CD4-positive, alpha-beta memory T cell (primary cell): ENCODE measurements at regions of chr2 and their contacts with region 1.

Region 1: GRCh38 chr2:168246483-168247340 is 683 bp downstream of the STK39 start:
- DNase-seq: peak; percentile 86 to 95 (median 88)
- H3K4me3 ChIP-seq: peak overlapping the region; percentile 58 to 66
- H3K4me3 Mint-ChIP-seq: peak overlapping the region; percentile 91 to 94 (median 93)
- H3K27ac ChIP-seq: peak overlapping the region; percentile 66
- H3K27ac Mint-ChIP-seq: peak overlapping the region; percentile 89 to 96 (median 96)
- H3K4me1 ChIP-seq: peaks cover 49% of the 10 kb centered on the region
- H3K4me1 Mint-ChIP-seq: peaks cover 26 to 53% (median 32%) of the 10 kb centered on the region in 4 donors
- H3K27me3 ChIP-seq: no peaks in the 10 kb centered on the region
- H3K27me3 Mint-ChIP-seq: no peaks in the 10 kb centered on the region

Region 2: DNA sequence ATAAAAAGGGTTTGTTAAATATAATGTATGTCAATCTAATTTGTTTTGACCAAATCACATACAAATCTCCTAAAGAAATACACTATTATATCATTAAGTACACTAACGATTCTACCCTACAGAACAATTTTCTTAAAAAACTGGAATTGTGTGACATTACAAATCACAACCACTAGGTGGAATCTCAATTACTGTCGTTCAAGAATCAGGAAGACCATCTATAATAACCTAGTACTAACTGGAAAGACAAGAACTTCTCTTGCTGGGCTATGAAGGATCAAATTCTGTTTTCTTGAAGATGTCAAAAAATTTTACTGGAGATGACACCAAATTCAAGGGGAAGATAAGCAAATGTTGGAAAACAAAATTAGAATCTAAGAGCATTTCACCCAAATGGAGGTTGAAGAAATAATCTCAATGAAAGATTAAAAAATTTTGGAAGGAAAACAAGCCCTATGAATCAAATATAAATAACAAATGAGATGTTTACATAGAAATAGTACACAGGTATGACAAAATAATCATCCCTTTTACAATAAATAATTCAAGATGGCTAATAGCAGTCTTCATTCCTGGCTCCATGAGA is 110.2 kb before region 1 on chr2:
- CTCF ChIA-PET with region 1: interaction called, 3 read pairs
- POLR2A ChIA-PET with region 1: no interaction called
- intact Hi-C with region 1: loop called (anchors 2 kb)
- DNase-seq: peak in 4 of 5 donors; percentile 19 to 41 (median 30)
- H3K4me3 ChIP-seq: no peak overlapping the region
- H3K4me3 Mint-ChIP-seq: no peak overlapping the region
- H3K27ac ChIP-seq: no peak overlapping the region
- H3K27ac Mint-ChIP-seq: peak overlapping the region in 1 of 7 donors; percentile 73
- H3K4me1 ChIP-seq: no peaks in the 10 kb centered on the region
- H3K4me1 Mint-ChIP-seq: peaks cover 8 to 25% (median 21%) of the 10 kb centered on the region in 4 donors
- H3K27me3 ChIP-seq: no peaks in the 10 kb centered on the region
- H3K27me3 Mint-ChIP-seq: no peaks in the 10 kb centered on the region

Region 3: DNA sequence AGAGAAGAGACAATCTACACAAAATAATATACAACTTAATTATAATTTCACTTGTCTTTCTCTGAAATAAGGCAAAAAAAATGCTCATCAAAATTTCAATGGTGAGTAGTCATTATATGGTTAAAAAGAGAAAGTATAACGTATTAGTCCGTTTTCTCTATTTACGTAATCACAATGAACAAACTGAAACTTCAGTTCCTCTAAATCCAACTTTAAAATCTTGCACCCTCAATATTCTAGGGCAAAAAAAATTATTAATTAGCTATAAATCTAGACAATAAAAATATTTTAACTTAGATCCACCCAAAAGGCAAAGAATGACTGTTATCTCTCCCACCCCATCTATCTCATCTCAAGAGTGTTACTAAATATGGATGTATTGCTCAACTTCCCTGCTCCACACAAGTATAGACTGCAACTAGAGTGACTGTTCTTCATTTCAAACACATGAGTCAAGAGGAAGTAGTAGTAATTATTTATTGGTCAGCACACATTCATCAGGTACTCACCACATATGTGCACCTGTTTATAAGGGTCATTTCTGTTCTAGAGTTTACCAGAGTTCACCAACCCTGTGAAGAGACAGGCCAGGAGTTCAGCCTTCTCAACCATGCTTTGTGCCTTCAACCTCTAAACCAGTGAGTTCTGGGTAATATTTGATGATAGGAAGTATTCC is 35.7 kb before region 1 on chr2:
- CTCF ChIA-PET with region 1: no interaction called
- POLR2A ChIA-PET with region 1: interaction called, 6 read pairs
- intact Hi-C with region 1: loop called (anchors 2 kb)
- DNase-seq: no peak
- H3K4me3 ChIP-seq: no peak overlapping the region
- H3K4me3 Mint-ChIP-seq: peak overlapping the region; percentile 18 to 89 (median 70)
- H3K27ac ChIP-seq: no peak overlapping the region
- H3K27ac Mint-ChIP-seq: peak overlapping the region in 6 of 7 donors; percentile 0 to 59 (median 12)
- H3K4me1 ChIP-seq: peaks cover 34% of the 10 kb centered on the region
- H3K4me1 Mint-ChIP-seq: peaks cover 46 to 63% (median 57%) of the 10 kb centered on the region in 4 donors
- H3K27me3 ChIP-seq: no peaks in the 10 kb centered on the region
- H3K27me3 Mint-ChIP-seq: no peaks in the 10 kb centered on the region

Region 4: DNA sequence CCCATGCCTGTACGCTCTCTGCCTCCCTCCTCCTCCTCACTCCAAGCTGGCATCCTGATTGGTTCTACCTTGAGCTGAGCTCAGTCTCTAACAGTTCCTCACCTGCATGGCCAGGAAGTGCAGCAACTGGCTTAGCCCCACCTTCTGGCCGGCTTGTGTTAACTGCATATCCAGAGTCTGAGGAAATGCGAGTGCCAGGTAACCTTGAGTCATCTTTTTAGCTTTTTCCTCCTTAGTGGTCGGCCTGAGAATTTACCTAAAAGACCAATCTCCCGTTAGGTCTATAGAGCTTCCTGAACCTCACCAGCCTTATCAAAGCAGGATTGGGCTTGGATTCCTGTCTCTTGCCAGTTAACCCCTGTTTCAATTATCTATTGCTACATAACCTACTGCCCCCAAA is 90.2 kb after region 1 on chr2:
- CTCF ChIA-PET with region 1: interaction called, 8 read pairs
- POLR2A ChIA-PET with region 1: no interaction called
- intact Hi-C with region 1: loop called (anchors 2 kb)
- DNase-seq: peak; percentile 46 to 66 (median 58)
- H3K4me3 ChIP-seq: no peak overlapping the region
- H3K4me3 Mint-ChIP-seq: no peak overlapping the region
- H3K27ac ChIP-seq: no peak overlapping the region
- H3K27ac Mint-ChIP-seq: peak overlapping the region in 1 of 7 donors; percentile 38
- H3K4me1 ChIP-seq: peaks cover 4% of the 10 kb centered on the region
- H3K4me1 Mint-ChIP-seq: peaks cover 2 to 8% (median 4%) of the 10 kb centered on the region in 4 donors
- H3K27me3 ChIP-seq: no peaks in the 10 kb centered on the region
- H3K27me3 Mint-ChIP-seq: peaks cover 2 to 4% of the 10 kb centered on the region in 2 donors

Region 5: DNA sequence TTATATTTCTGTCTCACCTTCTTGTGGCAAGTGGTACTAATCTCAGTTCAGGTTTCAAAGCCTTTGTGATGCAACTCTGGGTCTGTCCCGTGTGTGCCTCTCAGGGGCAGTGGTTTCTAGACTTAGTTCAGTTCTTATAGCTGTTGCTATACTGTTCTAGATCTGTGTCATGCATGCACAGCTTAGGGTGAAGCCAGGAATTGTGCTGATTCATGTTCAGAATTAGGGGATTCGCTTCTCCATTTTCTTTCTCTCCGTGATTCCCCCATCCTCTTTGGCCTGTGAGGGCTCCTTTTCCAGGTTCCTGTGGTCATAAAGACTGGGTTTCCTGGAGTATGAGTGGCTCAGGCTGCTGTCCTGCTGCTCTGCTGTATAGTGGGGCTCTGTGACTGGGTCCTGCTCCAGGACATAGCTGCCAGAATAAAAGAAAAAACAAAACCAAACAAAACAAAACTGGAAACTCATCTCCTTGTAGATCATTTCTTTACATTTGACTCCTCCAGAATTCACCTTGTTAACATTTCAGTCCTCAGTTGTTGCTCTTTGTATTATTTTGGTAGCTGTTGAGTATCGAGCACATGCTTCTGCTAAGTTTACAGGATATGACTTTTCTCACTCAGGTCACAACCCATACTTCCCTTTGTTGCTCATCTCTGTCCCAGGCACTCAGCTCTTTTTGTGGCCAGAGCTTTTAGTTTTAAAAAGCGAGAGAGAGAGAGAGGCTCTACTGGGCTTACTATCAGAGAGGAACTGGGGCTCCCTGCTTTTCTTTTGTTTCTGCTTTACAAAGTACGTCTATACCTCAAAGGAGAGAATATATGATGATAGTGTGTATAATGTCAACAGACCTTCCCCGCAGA is 243.5 kb after region 1 on chr2:
- CTCF ChIA-PET with region 1: no interaction called
- POLR2A ChIA-PET with region 1: no interaction called
- intact Hi-C with region 1: no loop called
- DNase-seq: peak; percentile 21 to 44 (median 25)
- H3K4me3 ChIP-seq: peak overlapping the region; percentile 0 to 39
- H3K4me3 Mint-ChIP-seq: peak overlapping the region; percentile 65 to 92 (median 82)
- H3K27ac ChIP-seq: peak overlapping the region; percentile 34
- H3K27ac Mint-ChIP-seq: peak overlapping the region; percentile 30 to 85 (median 77)
- H3K4me1 ChIP-seq: peaks cover 28% of the 10 kb centered on the region
- H3K4me1 Mint-ChIP-seq: peaks cover 21 to 34% (median 30%) of the 10 kb centered on the region in 4 donors
- H3K27me3 ChIP-seq: no peaks in the 10 kb centered on the region
- H3K27me3 Mint-ChIP-seq: no peaks in the 10 kb centered on the region

Region 6: DNA sequence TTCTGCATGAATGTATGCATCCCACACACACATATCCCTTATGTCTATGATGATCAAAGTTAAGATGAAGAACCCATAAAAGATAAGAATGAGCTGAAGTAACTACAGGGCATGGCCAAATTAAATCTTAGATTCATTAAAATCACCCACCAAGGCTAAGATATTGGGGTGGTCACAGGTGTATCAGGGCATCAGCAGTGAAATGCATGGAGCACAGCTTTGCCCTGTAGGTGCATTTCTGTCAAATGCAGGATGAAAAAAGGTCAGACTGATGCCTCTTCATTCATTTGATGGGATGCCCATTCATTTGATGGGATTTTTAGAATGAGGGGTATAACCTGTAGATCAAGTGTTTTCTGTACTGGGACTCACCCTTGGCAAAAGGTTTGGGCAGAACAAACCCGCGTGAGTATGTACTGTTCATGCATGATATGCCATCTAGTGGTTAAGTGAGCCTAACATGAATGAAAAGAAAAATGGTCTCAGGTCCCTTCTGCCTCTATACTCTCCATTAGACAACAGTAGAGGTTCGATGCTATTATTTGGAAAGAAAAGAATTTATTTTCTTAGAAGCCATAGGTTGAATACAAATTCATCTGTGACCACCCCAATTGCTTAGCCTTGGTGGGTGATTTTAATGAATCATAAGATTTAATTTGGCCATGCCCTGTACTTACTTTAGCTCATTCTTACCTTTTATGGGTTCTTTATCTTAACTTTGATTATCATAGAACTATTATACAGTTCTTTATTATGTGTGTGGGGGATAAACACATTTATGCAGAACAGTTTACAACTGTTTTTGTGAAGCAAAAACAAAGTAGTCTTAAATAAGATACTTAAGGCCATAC is 512.5 kb after region 1 on chr2:
- CTCF ChIA-PET with region 1: no interaction called
- POLR2A ChIA-PET with region 1: no interaction called
- intact Hi-C with region 1: loop called (anchors 5 kb)
- DNase-seq: peak; percentile 48 to 54 (median 54)
- H3K4me3 ChIP-seq: no peak overlapping the region
- H3K4me3 Mint-ChIP-seq: peak overlapping the region in 1 of 8 donors; percentile 9
- H3K27ac ChIP-seq: no peak overlapping the region
- H3K27ac Mint-ChIP-seq: peak overlapping the region in 2 of 7 donors; percentile 4 to 42
- H3K4me1 ChIP-seq: peaks cover 51% of the 10 kb centered on the region
- H3K4me1 Mint-ChIP-seq: peaks cover 34 to 51% (median 46%) of the 10 kb centered on the region in 4 donors
- H3K27me3 ChIP-seq: no peaks in the 10 kb centered on the region
- H3K27me3 Mint-ChIP-seq: no peaks in the 10 kb centered on the region